Activated CD4-positive, alpha-beta T cell treated with anti-CD3 and anti-CD28 coated beads for 36 hours (primary cell): ENCODE measurements at regions of chr15 and their contacts with region 1.

Region 1: DNA sequence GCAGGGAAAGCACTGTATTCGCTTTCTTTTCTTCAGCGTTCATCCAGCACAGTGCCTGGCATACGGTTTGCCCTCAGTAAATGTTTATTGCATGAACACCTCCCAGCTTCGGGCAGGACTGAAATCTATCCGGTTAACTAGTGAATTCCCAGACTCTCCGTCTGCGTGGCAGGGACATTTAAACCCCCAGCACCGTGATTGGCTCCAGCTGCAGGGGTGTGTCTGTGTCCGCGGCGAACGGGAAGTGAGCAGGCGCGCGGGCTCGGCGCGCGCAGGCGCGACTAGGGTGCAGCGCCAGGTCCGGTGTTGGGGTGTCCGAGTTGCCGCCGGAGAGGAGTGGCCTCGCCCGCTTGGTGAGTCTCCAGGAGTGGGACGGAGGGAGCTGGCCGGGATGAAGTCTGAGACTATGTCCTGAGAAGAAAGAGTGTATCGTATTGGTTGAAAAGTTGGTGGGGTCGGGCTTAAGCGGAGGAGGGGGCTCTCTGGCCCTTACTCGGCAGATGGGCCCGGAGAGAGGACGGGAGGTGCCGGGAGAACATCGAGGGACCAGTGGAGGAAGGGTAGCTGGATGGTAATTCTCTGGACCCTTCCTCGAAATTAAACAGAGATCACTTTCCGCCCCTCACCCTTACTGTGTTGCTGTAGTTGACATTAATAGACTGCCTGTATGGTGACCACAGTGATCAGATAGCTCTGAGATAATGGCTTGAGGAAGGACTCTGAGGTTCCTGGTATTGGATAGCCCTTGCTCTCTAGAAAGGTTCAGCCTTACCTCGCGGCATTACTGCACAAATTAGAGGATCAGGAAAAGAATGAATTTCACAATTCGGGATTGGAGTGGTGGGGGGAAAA is at the start of gene SNAP23:
- DNase-seq: peak; percentile 89
- ATAC-seq: peak; percentile 95
- H3K4me3 Mint-ChIP-seq: peak within 1 kb of the TSS; percentile 96
- H3K27ac Mint-ChIP-seq: peak within 1 kb of the TSS; percentile 97
- H3K4me1 Mint-ChIP-seq: peaks cover 68% of the 10 kb centered on the region
- H3K27me3 Mint-ChIP-seq: no peaks in the 10 kb centered on the region
- total RNA-seq, gene SNAP23: 45.5 to 77.5 TPM

Region 2: DNA sequence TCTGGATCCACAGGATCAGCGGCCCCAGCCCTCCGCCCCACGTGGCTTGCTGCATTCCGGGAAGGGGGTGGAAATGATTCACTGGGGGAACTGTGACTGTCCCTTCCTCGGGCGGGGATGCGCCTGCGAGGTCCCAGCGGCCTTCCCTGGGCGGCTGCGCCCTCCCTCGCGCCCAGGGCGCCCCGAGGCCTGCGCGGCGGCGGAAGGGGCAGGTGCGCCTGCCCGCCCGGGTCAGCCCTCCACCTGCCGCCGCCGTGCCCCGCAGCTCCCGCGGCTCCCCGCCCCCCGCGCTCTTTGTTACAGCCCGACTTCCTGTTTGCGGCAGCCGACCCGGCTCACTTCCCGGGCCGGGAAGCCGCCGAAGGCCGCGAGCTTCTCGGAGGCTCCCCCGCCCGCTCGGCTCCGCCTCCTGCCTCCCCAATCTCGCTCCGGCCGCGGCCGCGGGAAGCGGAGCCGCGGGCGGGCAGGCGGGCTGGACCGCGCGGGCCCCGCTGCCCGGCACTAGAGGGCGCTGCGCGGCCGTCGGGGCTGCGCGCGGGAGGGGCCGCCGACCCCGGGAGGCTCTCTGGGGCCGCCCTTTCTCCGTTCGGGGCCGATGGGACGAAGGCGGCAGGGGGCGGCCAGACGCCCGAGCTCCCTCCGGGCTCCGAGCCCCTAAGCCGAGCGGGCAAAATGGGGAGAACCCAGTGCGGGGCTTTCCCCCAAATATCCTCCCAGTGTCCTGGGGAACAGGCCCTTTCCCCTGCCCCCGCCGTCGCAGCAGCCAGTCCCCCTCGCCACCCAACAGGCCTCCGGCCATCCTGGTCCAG is 1553.9 kb before region 1 on chr15:
- CTCF ChIA-PET with region 1: no interaction called
- POLR2A ChIA-PET with region 1: no interaction called
- intact Hi-C with region 1: no loop called
- DNase-seq: peak; percentile 81
- ATAC-seq: peak; percentile 82
- H3K4me3 Mint-ChIP-seq: peak overlapping the region; percentile 80
- H3K27ac Mint-ChIP-seq: peak overlapping the region; percentile 92
- H3K4me1 Mint-ChIP-seq: peaks cover 39% of the 10 kb centered on the region
- H3K27me3 Mint-ChIP-seq: no peaks in the 10 kb centered on the region

Region 3: DNA sequence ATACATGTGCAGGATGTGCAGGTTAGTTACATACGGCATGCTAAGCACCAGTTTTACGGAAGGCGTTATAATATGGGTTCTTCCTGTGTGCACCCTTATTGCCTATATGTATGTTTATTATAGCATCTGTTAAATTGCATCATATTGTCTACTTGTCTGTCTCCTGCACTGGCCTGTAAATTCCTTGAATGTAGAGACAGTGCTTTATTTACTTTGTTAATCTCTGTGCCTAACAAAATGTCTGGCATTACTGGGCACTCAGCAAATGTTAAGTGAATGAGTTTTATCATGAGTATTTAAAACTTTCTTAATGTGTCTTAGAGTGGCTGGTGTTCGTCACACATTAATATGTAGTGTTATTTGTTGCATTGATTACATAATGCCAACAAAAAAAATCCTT is 811.6 kb before region 1 on chr15:
- CTCF ChIA-PET with region 1: no interaction called
- POLR2A ChIA-PET with region 1: no interaction called
- intact Hi-C with region 1: no loop called
- DNase-seq: no peak
- ATAC-seq: no peak
- H3K4me3 Mint-ChIP-seq: no peak overlapping the region
- H3K27ac Mint-ChIP-seq: no peak overlapping the region
- H3K4me1 Mint-ChIP-seq: peaks cover 57% of the 10 kb centered on the region
- H3K27me3 Mint-ChIP-seq: no peaks in the 10 kb centered on the region

Region 4: DNA sequence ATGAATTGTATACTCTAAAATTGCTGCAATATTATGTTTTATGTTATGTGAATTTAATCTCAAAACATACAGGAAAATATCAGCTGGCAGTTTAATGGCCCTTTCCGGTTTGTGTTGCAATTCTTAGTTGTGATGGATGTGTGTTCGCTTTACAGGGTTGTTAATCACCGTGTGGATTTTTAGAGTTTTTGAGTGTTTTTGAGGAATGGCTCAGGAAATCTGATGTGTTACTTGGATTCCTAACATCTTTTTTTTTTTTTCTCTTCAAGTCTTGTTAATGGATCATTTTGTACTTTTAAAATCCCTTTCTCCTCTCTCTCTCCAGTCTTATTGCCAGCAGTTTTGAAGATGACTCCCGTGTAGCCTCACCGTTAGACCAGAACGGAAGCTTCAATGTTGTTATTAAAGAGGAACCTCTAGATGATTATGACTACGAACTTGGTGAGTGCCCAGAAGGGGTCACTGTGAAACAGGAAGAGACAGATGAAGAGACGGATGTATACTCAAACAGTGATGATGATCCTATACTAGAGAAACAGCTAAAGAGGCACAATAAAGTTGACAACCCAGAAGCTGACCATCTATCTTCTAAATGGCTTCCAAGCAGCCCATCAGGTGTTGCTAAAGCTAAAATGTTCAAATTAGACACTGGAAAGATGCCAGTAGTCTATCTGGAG is 799.7 kb before region 1 on chr15:
- CTCF ChIA-PET with region 1: interaction called, 3 read pairs
- POLR2A ChIA-PET with region 1: no interaction called
- intact Hi-C with region 1: loop called in 1 of 2 experiments (anchors 10 kb)
- DNase-seq: peak; percentile 66
- ATAC-seq: peak; percentile 93
- H3K4me3 Mint-ChIP-seq: peak overlapping the region; percentile 2
- H3K27ac Mint-ChIP-seq: peak overlapping the region; percentile 78
- H3K4me1 Mint-ChIP-seq: peaks cover 43% of the 10 kb centered on the region
- H3K27me3 Mint-ChIP-seq: no peaks in the 10 kb centered on the region

Region 5: GRCh38 chr15:42207674-42208579 is 287.7 kb before region 1 on chr15 and contains the start of gene VPS39:
- CTCF ChIA-PET with region 1: no interaction called
- POLR2A ChIA-PET with region 1: no interaction called
- intact Hi-C with region 1: loop called in 1 of 2 experiments (anchors 2 kb)
- DNase-seq: peak; percentile 91
- ATAC-seq: peak; percentile 98
- H3K4me3 Mint-ChIP-seq: peak within 1 kb of the TSS; percentile 99
- H3K27ac Mint-ChIP-seq: peak within 1 kb of the TSS; percentile 97
- H3K4me1 Mint-ChIP-seq: peaks cover 32% of the 10 kb centered on the region
- H3K27me3 Mint-ChIP-seq: no peaks in the 10 kb centered on the region
- total RNA-seq, gene VPS39: 49.5 to 56.2 TPM

Region 6: DNA sequence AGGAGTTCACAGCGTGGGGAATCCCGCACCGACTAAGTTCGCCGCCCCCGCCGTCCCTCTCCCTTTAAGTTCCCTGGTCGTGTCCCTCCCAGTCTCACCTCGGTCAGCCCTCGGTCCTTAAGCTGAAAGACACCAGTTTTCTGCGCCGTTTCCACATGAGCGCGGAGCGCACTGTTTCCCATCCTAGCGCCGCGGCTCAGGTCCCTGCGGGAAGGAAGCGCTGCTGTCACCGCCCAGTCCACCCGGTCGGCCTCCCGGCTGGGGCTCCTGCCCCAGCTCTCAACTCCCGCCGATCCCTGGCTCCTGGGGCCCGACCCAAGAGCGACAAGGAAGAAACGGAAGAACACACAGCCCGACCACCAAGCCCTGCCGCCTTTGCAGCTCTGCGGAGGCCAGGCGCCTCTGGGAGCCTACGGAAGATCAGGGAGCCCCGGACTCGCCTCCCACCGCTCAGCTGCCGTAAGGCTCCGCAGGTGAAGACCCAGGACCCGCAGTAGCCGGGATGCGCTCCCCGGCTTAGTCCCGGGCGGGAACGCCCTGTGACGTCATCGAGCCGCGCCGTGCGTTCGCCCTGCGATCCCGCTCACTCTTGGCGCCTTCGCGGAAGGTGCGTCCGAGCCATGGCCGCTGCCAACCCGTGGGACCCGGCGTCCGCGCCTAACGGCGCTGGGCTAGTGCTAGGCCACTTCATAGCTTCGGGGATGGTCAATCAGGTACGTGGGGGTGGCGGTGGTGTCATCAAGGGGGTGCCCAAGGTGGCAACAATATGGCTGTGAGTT is 52.9 kb after region 1 on chr15 and contains the starts of genes HAUS2 and LRRC57:
- CTCF ChIA-PET with region 1: interaction called, 4 read pairs
- POLR2A ChIA-PET with region 1: interaction called, 3 read pairs
- intact Hi-C with region 1: loop called (anchors 1 to 2 kb)
- DNase-seq: peak; percentile 93
- ATAC-seq: peak; percentile 89
- H3K4me3 Mint-ChIP-seq: peak within 1 kb of the TSS; percentile 96
- H3K27ac Mint-ChIP-seq: peak within 1 kb of the TSS; percentile 96
- H3K4me1 Mint-ChIP-seq: peaks cover 51% of the 10 kb centered on the region
- H3K27me3 Mint-ChIP-seq: no peaks in the 10 kb centered on the region
- total RNA-seq, gene HAUS2: 46.1 to 55.1 TPM
- total RNA-seq, gene LRRC57: 14.8 to 15.2 TPM

Region 7: GRCh38 chr15:42650208-42651066 is 154.8 kb after region 1 on chr15:
- CTCF ChIA-PET with region 1: interaction called, 3 read pairs
- POLR2A ChIA-PET with region 1: no interaction called
- intact Hi-C with region 1: loop called in 1 of 2 experiments (anchors 5 kb)
- DNase-seq: peak; percentile 78
- ATAC-seq: peak; percentile 100
- H3K4me3 Mint-ChIP-seq: no peak overlapping the region
- H3K27ac Mint-ChIP-seq: no peak overlapping the region
- H3K4me1 Mint-ChIP-seq: peaks cover 2% of the 10 kb centered on the region
- H3K27me3 Mint-ChIP-seq: no peaks in the 10 kb centered on the region

Region 8: DNA sequence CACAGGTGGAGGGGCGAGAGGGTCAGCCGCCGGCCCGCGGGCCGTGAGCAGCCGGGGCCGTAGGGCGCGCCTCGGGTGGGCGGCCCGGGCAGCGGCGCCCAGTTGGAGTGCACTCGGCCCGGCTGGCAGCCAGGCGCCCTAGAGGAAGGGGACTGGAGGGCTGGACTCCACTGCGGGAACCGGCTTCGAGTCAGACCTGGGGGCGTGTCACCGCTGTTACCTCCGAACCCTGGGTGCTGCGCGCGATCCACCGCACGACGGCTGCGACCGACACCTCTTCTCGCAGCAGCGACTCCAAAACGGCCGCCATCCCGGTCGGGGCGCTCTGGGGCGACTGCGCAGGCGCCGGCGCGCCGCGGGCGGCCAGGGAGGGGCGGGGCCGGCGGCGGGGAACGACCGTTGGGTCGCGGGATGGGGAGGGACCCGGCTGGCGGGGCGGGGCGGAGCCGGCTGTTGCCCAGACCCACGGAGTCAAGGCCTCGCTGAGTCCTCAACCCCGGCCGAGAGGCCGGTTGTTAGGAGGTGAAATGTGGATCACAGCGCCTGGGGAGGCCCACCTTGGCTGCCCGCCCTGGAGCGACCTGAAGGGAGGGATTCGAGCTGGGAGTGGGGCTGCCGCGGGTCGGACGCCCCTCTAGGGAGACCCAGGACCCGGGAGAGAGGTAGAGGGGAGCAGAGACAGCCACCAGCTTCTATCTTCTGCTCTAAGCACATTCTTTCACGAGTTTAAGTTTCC is 241.4 kb after region 1 on chr15 and contains the start of gene CDAN1:
- CTCF ChIA-PET with region 1: no interaction called
- POLR2A ChIA-PET with region 1: no interaction called
- intact Hi-C with region 1: loop called in 1 of 2 experiments (anchors 2 kb)
- DNase-seq: peak; percentile 96
- ATAC-seq: peak; percentile 94
- H3K4me3 Mint-ChIP-seq: peak within 1 kb of the TSS; percentile 76
- H3K27ac Mint-ChIP-seq: peak within 1 kb of the TSS; percentile 61
- H3K4me1 Mint-ChIP-seq: peaks cover 16% of the 10 kb centered on the region
- H3K27me3 Mint-ChIP-seq: no peaks in the 10 kb centered on the region
- total RNA-seq, gene CDAN1: 12.9 to 16.6 TPM